Panc1 (cell line): ENCODE measurements at regions of chr17 and their contacts with region 1.

Region 1: DNA sequence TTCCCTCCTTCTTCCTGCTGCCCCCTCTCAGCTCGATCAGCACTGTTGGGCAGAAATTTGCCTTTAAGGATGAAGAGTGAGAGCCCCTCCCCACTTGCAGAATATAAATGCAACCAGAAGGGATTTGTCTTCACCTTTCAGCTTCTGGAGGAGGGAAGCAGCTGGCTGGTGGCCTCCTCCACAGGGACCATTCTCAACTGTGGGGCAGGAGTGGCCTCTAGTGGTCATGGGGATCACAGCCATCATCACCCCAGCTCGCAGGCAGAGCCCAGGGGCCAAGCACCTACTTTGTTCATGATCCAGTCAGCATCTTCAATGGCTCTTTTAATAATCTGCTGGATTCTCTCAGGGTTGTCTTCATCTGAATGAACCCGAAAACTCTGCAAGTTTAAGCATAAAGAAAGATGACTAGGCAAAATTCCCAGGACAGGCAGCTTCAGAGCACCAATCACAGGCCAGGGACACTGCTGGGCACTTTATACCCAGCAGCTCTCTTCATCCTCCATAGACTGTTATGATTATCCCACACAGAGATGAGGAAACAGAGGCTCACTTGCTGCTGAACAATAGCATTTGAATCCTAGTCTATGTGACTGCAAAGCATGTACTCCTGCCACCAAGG is 13.1 kb downstream of the LYRM9 start:
- DNase-seq: peak; percentile 38
- ATAC-seq: peak; percentile 98
- H3K4me3 ChIP-seq: no peak overlapping the region
- H3K27ac ChIP-seq: no peak overlapping the region
- H3K4me1 ChIP-seq: no peaks in the 10 kb centered on the region
- H3K27me3 ChIP-seq: no peaks in the 10 kb centered on the region
- CTCF ChIP-seq: peak; percentile 89

Region 2: GRCh38 chr17:27654654-27655524 is 225.2 kb before region 1 on chr17:
- CTCF ChIA-PET with region 1: interaction called, 11 read pairs
- POLR2A ChIA-PET with region 1: no interaction called
- in situ Hi-C with region 1: no loop called
- intact Hi-C with region 1: loop called (anchors 10 kb)
- DNase-seq: peak; percentile 38
- ATAC-seq: peak; percentile 92
- H3K4me3 ChIP-seq: no peak overlapping the region
- H3K27ac ChIP-seq: no peak overlapping the region
- H3K4me1 ChIP-seq: no peaks in the 10 kb centered on the region
- H3K27me3 ChIP-seq: no peaks in the 10 kb centered on the region
- CTCF ChIP-seq: peak; percentile 98

Region 3: DNA sequence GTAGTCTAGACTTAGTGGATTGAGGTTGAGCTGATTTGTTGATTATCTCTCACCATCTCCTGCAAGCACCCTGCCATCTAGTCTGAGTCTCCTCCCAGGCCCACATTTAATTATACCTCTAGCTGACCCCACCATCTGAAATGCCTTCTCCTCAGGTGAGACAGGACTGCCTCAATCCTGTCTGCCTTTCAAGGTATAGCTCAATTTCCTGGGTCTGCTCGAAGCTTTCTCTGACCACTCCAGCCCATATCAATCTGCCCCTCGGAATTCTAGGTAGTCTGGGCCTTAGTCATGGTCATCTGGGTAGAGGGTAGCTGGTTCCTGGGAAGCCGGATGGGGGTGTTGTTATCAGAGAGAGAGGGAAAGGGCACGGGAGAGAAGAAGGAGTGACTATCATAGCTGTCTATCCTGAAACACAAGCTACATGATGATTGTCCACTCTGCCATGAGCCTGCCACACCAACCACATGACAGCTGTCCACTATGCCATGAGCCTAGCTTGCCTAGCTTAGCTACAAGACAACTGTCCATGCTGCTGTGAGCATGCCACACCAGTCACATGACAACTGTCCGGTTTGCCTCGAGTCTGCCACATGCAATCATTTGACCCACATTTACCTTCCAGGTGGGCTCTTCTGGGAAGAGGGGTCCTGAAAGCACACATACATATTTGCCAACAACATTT is 21.3 kb before region 1 on chr17:
- CTCF ChIA-PET with region 1: interaction called, 10 read pairs
- POLR2A ChIA-PET with region 1: no interaction called
- in situ Hi-C with region 1: no loop called
- intact Hi-C with region 1: no loop called
- DNase-seq: no peak
- ATAC-seq: no peak
- H3K4me3 ChIP-seq: no peak overlapping the region
- H3K27ac ChIP-seq: no peak overlapping the region
- H3K4me1 ChIP-seq: no peaks in the 10 kb centered on the region
- H3K27me3 ChIP-seq: peaks cover 18% of the 10 kb centered on the region
- CTCF ChIP-seq: no peak

Region 4: DNA sequence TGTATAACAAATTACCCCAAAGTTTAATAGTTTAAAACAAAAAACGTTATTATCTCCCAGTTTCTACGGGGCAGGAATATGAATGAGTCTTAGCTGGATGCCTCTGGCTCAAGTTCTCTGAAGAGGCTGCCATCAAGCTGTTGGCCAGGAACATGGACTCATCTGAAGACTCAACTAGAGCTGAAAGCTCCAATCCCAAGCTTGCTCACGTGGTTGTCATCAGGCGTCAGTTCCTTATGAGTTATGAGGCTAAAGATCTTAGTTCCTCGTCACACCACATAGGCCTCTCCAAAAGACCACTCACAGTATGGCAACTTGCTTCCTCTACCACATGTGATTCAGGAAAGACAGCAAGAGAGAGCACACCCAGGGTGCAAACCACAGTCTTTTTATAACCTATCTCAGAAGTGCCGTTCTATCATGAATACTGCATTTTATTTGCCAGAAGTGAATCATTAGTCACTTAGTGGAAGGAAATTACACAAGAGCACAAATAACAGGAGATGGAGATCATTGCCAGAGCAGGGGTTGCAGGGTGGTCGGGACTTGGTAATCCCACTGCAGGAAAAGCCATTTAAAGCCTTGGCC is 113.7 kb after region 1 on chr17:
- CTCF ChIA-PET with region 1: no interaction called
- POLR2A ChIA-PET with region 1: no interaction called
- in situ Hi-C with region 1: no loop called
- intact Hi-C with region 1: no loop called
- DNase-seq: no peak
- ATAC-seq: no peak
- H3K4me3 ChIP-seq: no peak overlapping the region
- H3K27ac ChIP-seq: no peak overlapping the region
- H3K4me1 ChIP-seq: no peaks in the 10 kb centered on the region
- H3K27me3 ChIP-seq: peaks cover 25% of the 10 kb centered on the region
- CTCF ChIP-seq: no peak